GM12878 (cell line): ENCODE measurements at regions of chr5 and their contacts with region 1.

Region 1: GRCh38 chr5:59412428-59412827 is 481.1 kb downstream of the PDE4D start:
- DNase-seq: no peak
- ATAC-seq: no peak
- H3K4me3 ChIP-seq: no peak overlapping the region
- H3K27ac ChIP-seq: no peak overlapping the region
- H3K4me1 ChIP-seq: no peaks in the 10 kb centered on the region
- H3K27me3 ChIP-seq: no peaks in the 10 kb centered on the region
- CTCF ChIP-seq: no peak
- EP300 ChIP-seq: no peak
- POLR2A ChIP-seq: no peak
- RAD21 ChIP-seq: no peak

Region 2: GRCh38 chr5:59485629-59486439 is 73.4 kb after region 1 on chr5:
- CTCF ChIA-PET with region 1: no interaction called
- POLR2A ChIA-PET with region 1: no interaction called
- RAD21 ChIA-PET with region 1: no interaction called
- SMC1A ChIA-PET with region 1: no interaction called
- in situ Hi-C with region 1: no loop called
- intact Hi-C with region 1: loop called (anchors 5 kb)
- DNase-seq: no peak
- ATAC-seq: peak; percentile 46
- H3K4me3 ChIP-seq: no peak overlapping the region
- H3K27ac ChIP-seq: no peak overlapping the region
- H3K4me1 ChIP-seq: no peaks in the 10 kb centered on the region
- H3K27me3 ChIP-seq: 0 out of 4 replicates have a peak, but pooled peaks cover 0 to 1% of the 10 kb centered on the region in 2 experiments
- CTCF ChIP-seq: no peak
- EP300 ChIP-seq: no peak
- POLR2A ChIP-seq: no peak
- RAD21 ChIP-seq: no peak